Dorsolateral prefrontal cortex (tissue), 120 donors: ENCODE measurements at regions of chr11 and their contacts with region 1.

Region 1: GRCh38 chr11:39412117-39412516 is 2047.3 kb downstream of the LRRC4C start:
- DNase-seq: peak in 2 of 10 donors; percentile 42 to 53
- H3K4me3 ChIP-seq: no peak overlapping the region
- H3K27ac ChIP-seq: peak overlapping the region in 4 of 59 donors; percentile 9 to 38 (median 29)
- H3K27me3 ChIP-seq: no peaks in the 10 kb centered on the region
- CTCF ChIP-seq: no peak

Region 2: GRCh38 chr11:39374963-39375698 is 37.0 kb before region 1 on chr11:
- intact Hi-C with region 1: no loop called
- DNase-seq: no peak
- H3K4me3 ChIP-seq: no peak overlapping the region
- H3K27ac ChIP-seq: no peak overlapping the region
- H3K27me3 ChIP-seq: no peaks in the 10 kb centered on the region
- CTCF ChIP-seq: peak; percentile 42 to 78 (median 63)

Region 3: DNA sequence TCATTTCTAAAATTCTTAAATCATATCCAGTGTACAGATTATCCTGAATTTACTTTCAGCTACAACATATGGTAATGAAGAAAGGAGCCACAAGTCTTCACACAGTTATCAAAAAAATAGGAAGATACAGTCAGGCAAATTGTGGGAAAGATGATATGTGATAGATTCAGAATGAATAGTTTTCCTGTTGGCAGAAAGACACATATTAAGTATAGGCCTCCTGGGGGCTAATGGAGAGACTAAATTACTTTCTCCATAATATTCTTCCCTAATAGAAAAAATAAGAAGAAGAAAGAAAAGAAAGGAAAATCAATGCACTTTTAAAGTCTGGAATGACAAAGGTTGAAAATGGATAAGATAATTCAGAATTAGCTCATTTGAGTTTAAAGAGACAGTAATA is 26.2 kb before region 1 on chr11:
- intact Hi-C with region 1: no loop called
- DNase-seq: no peak
- H3K4me3 ChIP-seq: no peak overlapping the region
- H3K27ac ChIP-seq: no peak overlapping the region
- H3K27me3 ChIP-seq: no peaks in the 10 kb centered on the region
- CTCF ChIP-seq: no peak

Region 4: GRCh38 chr11:40062616-40063015 is 650.5 kb after region 1 on chr11:
- intact Hi-C with region 1: loop called in 1 of 2 experiments (anchors 5 kb)
- DNase-seq: no peak
- H3K4me3 ChIP-seq: no peak overlapping the region
- H3K27ac ChIP-seq: peak overlapping the region in 24 of 59 donors; percentile 1 to 70 (median 40)
- H3K27me3 ChIP-seq: no peaks in the 10 kb centered on the region
- CTCF ChIP-seq: no peak